ENCODE measurements at regions of chr5 and their contacts with region 1.

Region 1: GRCh38 chr5:149551200-149552037 is at the start of gene CSNK1A1:
- ATAC-seq: peak; percentile 76 to 93 (median 91)
- H3K4me3 ChIP-seq: peak within 1 kb of the TSS; percentile 57 to 91 (median 67)
- H3K27ac ChIP-seq: peak within 1 kb of the TSS; percentile 96 to 99
- H3K4me1 ChIP-seq: peaks cover 18 to 25% of the 10 kb centered on the region in 2 donors
- total RNA-seq, gene CSNK1A1: 196 to 391 (median 279) TPM

Region 2: GRCh38 chr5:149268928-149269557 is 282.4 kb before region 1 on chr5:
- in situ Hi-C with region 1: no loop called
- ATAC-seq: peak in 2 of 8 experiments; percentile 3
- H3K4me3 ChIP-seq: no peak overlapping the region
- H3K27ac ChIP-seq: no peak overlapping the region
- H3K4me1 ChIP-seq: peaks cover 5 to 6% of the 10 kb centered on the region in 2 donors

Region 3: GRCh38 chr5:149317281-149318048 is 234.0 kb before region 1 on chr5:
- in situ Hi-C with region 1: loop called in 2 of 9 experiments (anchors 25 kb)
- ATAC-seq: peak in 5 of 8 experiments; percentile 7 to 29 (median 11)
- H3K4me3 ChIP-seq: no peak overlapping the region
- H3K27ac ChIP-seq: no peak overlapping the region
- H3K4me1 ChIP-seq: peaks cover 10 to 14% of the 10 kb centered on the region in 2 donors

Region 4: DNA sequence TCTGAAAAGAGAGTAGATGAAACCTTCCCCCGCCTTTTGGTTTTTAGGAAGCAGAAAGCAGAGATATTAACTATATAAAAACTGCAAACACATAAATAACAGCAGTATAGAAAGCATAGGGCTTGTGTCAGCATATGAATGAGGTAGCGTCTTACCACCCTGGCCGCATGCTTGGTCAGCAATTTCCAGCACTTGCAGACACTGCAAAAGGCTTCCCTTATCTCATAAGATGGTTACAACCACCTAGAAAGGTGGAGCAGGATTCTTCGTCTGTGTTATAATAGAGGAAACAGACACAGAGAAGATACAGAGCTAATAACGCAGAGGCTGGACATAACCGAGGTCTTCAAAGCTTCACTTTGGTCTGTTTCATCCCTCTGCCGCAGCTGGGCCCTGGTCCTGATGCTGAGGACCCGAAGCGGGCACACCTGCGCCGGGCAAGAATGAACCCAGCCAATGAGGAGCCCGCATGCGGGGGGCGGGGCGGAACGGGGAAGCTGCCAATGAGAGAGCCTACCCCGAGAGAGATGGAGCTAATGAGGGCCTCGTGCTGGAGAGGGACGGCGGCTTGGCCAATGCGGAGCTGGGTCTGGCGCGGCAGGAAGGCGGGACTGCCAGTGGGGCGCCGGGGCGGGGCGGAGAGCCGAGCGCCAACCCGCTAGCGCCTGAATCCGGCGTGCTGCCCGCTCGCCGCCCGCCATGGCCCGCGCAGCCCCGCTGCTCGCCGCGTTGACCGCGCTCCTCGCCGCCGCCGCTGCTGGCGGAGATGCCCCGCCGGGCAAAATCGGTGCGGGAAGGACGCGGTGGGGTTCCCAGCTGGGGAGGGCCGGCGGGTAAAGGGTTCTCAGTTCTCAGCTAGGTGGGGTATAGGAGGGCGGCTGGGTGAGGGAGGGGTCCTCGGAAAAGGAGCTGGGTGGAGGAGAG is 193.8 kb before region 1 on chr5 and contains the start of gene PCYOX1L:
- in situ Hi-C with region 1: loop called in 3 of 9 experiments (anchors 25 kb)
- ATAC-seq: peak; percentile 98 to 100 (median 98)
- H3K4me3 ChIP-seq: peak within 1 kb of the TSS; percentile 91 to 99 (median 98)
- H3K27ac ChIP-seq: peak within 1 kb of the TSS; percentile 82 to 83
- H3K4me1 ChIP-seq: peaks cover 13% of the 10 kb centered on the region in 2 donors
- total RNA-seq, gene PCYOX1L: 8.8 to 20.0 (median 15.6) TPM

Region 5: GRCh38 chr5:149434162-149435014 is 117.0 kb before region 1 on chr5:
- in situ Hi-C with region 1: loop called in 8 of 9 experiments (anchors 10 to 25 kb)
- ATAC-seq: peak; percentile 2 to 83 (median 74)
- H3K4me3 ChIP-seq: no peak overlapping the region
- H3K27ac ChIP-seq: no peak overlapping the region
- H3K4me1 ChIP-seq: no peaks in the 10 kb centered on the region

Region 6: DNA sequence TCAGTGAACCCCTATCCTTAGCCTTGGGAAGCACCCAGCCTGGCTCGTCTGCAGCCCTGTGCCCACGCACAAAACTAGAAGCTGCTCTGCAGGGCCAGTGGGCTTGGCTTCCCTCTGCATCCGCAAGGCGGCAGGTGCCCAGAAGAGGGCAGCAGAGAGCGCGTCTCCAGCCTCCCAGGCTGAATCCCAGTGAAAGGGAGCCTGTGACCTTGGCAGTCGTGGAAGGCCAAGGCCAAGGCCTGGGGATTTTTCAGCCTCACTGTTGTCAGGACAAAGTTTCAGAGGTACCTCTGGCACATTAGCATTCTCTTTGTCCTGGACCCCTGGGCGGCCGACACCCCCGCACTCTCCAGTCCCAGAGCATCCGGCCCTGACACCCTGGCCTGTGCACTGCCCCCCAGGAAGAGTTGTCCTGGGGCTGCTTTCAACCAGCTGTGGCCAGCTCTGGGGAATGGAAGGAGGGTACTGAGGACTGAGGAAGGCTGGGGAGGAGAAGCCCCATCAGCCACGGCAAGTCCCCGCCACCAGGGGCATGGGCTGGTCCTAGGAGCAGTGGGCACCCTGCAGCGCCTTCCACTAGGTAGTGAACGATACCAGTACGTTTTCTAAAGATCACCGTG is 108.7 kb before region 1 on chr5:
- in situ Hi-C with region 1: loop called in 8 of 9 experiments (anchors 10 to 25 kb)
- ATAC-seq: peak; percentile 13 to 65 (median 56)
- H3K4me3 ChIP-seq: no peak overlapping the region
- H3K27ac ChIP-seq: peak overlapping the region; percentile 26 to 53
- H3K4me1 ChIP-seq: peaks cover 10 to 23% of the 10 kb centered on the region in 2 donors